T-cell (primary cell): ENCODE measurements at regions of chr4 and their contacts with region 1.

Region 1: DNA sequence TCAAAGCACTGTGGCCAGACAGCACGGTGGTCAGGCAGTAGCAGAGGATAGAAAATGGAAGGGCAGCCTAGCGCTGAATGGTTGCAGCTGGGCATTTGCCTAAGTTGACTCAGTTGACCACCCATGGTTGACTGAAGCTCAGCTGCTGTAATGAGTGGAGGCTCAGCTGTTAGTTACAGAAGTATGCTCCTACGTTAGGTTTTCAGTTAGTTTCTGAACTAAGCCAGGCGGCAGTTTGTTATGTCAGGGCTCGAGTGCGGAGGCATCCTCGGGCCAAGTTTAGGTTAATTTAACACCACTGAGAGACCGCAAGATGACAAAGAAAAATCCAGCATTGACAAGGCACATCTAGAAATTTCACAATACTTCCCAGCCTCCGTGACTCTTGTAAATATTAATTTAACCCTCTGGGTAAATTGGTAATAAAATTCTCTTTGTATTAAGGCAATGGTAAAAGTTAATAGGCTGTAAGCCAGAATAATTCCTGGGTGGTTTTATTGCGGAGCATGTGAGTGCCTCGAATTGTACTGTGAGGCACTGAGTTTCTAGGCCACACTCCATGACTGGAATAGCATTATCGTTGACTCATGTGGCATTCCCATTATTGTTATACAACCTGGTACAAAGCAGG is 33.1 kb upstream of the CDKN2AIP start:
- DNase-seq: no peak
- ATAC-seq: no peak
- H3K4me3 ChIP-seq: no peak overlapping the region
- H3K4me3 Mint-ChIP-seq: no peak overlapping the region
- H3K27ac ChIP-seq: no peak overlapping the region
- H3K27ac Mint-ChIP-seq: no peak overlapping the region
- H3K4me1 ChIP-seq: peaks cover 0 to 3% of the 10 kb centered on the region in 2 experiments
- H3K4me1 Mint-ChIP-seq: peaks cover 7 to 12% (median 9%) of the 10 kb centered on the region in 3 donors
- H3K27me3 ChIP-seq: no peaks in the 10 kb centered on the region
- H3K27me3 Mint-ChIP-seq: no peaks in the 10 kb centered on the region

Region 2: DNA sequence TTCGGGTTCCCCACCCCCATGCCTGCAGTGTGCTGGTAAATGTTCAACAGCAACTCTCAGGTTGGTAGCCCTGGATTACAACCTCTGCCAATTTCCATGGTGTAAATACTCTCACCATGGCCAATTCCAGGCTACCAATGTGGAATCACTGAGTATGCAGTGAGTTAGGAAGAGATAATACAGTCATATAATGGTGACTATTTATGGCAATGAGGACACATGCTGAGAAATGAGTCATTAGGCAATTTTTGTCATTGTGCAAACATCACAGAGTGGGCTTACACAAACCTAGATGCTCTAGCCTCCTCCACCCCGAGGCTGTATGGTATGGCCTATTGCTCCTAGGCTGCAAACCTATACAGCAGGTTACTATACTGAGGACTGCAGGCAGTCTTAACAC is 84.5 kb before region 1 on chr4:
- CTCF ChIA-PET with region 1: no interaction called
- POLR2A ChIA-PET with region 1: no interaction called
- DNase-seq: no peak
- ATAC-seq: no peak
- H3K4me3 ChIP-seq: no peak overlapping the region
- H3K4me3 Mint-ChIP-seq: no peak overlapping the region
- H3K27ac ChIP-seq: no peak overlapping the region
- H3K27ac Mint-ChIP-seq: no peak overlapping the region
- H3K4me1 ChIP-seq: peaks cover 0 to under 1% of the 10 kb centered on the region in 2 experiments
- H3K4me1 Mint-ChIP-seq: peaks cover 3 to 4% (median 4%) of the 10 kb centered on the region in 3 donors
- H3K27me3 ChIP-seq: peaks cover 0 to 15% of the 10 kb centered on the region in 2 experiments
- H3K27me3 Mint-ChIP-seq: peaks cover 4 to 12% of the 10 kb centered on the region in 2 donors

Region 3: DNA sequence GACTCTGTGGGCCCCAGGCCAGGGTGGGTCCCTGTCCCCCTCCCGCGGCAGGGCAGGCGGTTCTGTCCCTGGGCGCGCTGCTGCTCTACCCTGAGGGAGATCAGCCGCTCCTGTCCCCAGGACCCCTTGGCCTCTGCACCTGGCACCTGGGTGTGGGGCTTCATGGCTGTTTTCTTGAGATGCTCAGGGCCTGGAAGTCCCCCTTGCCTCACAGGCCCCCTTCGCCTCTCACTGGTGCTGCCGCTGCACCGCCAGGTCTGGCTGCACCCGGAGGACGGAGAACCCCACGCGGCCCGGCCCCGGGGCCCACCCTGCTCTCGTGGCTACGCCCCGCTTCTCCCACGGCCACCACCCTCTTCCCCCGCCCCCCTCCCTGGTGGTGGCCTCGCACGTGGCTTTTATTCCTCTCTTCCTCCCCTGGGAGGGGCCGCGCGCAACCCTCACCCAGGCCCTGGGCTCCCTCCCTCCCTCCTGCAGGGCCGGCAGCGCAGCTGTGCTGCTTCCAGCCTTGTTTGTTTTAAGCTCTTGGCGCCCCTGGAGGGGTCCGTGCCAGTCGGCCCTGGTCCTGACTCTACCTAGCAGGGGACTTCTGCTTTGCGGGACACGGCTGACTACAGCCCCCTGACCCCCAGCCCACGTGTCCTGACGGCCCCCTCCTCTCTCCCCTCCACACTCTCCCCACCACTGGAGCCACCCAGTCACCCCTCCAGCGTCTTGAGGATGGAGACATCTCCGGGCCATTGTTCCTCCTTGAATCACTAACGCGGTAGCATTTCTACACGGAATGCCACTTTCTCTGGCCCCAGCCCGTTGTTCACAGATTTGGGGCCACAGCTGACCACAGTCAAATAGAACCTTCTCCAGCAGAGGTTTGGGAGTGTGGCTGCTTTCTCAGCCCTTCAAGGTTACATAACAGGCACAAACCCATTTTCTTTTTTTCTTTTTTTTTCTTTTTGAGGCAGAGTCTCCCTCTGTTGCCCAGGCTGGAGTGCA is 68.5 kb before region 1 on chr4:
- CTCF ChIA-PET with region 1: interaction called, 3 to 11 read pairs
- POLR2A ChIA-PET with region 1: no interaction called
- DNase-seq: peak in 1 of 35 experiments; percentile 8
- ATAC-seq: peak in 2 of 4 experiments; percentile 26 to 30
- H3K4me3 ChIP-seq: no peak overlapping the region
- H3K4me3 Mint-ChIP-seq: peak overlapping the region in 1 of 3 donors; percentile 48
- H3K27ac ChIP-seq: no peak overlapping the region
- H3K27ac Mint-ChIP-seq: no peak overlapping the region
- H3K4me1 ChIP-seq: no peaks in the 10 kb centered on the region
- H3K4me1 Mint-ChIP-seq: peaks cover 0 to 5% (median 4%) of the 10 kb centered on the region in 3 donors
- H3K27me3 ChIP-seq: peaks cover 0 to 40% of the 10 kb centered on the region in 2 experiments
- H3K27me3 Mint-ChIP-seq: peaks cover 15 to 22% of the 10 kb centered on the region in 2 donors

Region 4: GRCh38 chr4:183355405-183355804 is 55.9 kb before region 1 on chr4:
- CTCF ChIA-PET with region 1: no interaction called
- POLR2A ChIA-PET with region 1: no interaction called
- DNase-seq: no peak
- ATAC-seq: no peak
- H3K4me3 ChIP-seq: no peak overlapping the region
- H3K4me3 Mint-ChIP-seq: no peak overlapping the region
- H3K27ac ChIP-seq: no peak overlapping the region
- H3K27ac Mint-ChIP-seq: no peak overlapping the region
- H3K4me1 ChIP-seq: no peaks in the 10 kb centered on the region
- H3K4me1 Mint-ChIP-seq: peaks cover 0 to 1% (median 0%) of the 10 kb centered on the region in 3 donors
- H3K27me3 ChIP-seq: peaks cover 0 to 17% of the 10 kb centered on the region in 2 experiments
- H3K27me3 Mint-ChIP-seq: peaks cover 13 to 15% of the 10 kb centered on the region in 2 donors

Region 5: GRCh38 chr4:183422967-183423631 is 11.8 kb after region 1 on chr4:
- CTCF ChIA-PET with region 1: interaction called in 1 of 2 experiments, 4 read pairs
- POLR2A ChIA-PET with region 1: interaction called in 1 of 2 experiments, 13 read pairs
- DNase-seq: no peak
- ATAC-seq: no peak
- H3K4me3 ChIP-seq: no peak overlapping the region
- H3K4me3 Mint-ChIP-seq: no peak overlapping the region
- H3K27ac ChIP-seq: no peak overlapping the region
- H3K27ac Mint-ChIP-seq: peak overlapping the region in 1 of 2 donors; percentile 48
- H3K4me1 ChIP-seq: peaks cover 3 to 5% of the 10 kb centered on the region in 2 experiments
- H3K4me1 Mint-ChIP-seq: peaks cover 7 to 11% (median 9%) of the 10 kb centered on the region in 3 donors
- H3K27me3 ChIP-seq: peaks cover 0 to 6% of the 10 kb centered on the region in 2 experiments
- H3K27me3 Mint-ChIP-seq: no peaks in the 10 kb centered on the region